Activated T-helper 1 cell treated with anti-CD3 and anti-CD28 coated beads, Interleukin-12 subunit alpha, Interleukin-12 subunit beta, Interleukin-2, Interleukin-4 antibody, amounts not matched to agents 30 ng/mL and 10 ng/mL and 1 ng/mL, durations not matched to agents 14 hours and 24 hours and 36 hours (primary cell): ENCODE measurements at regions of chr3 and their contacts with region 1.

Region 1: GRCh38 chr3:106183762-106184391 is 315.1 kb upstream of the CBLB start:
- DNase-seq: no peak
- H3K4me3 Mint-ChIP-seq: peak overlapping the region; percentile 10
- H3K27ac Mint-ChIP-seq: peak overlapping the region; percentile 31
- H3K4me1 Mint-ChIP-seq: peaks cover 56% of the 10 kb centered on the region
- H3K27me3 Mint-ChIP-seq: no peaks in the 10 kb centered on the region

Region 2: GRCh38 chr3:105647047-105647446 is 536.8 kb before region 1 on chr3:
- intact Hi-C with region 1: no loop called
- DNase-seq: no peak
- H3K4me3 Mint-ChIP-seq: no peak overlapping the region
- H3K27ac Mint-ChIP-seq: no peak overlapping the region
- H3K4me1 Mint-ChIP-seq: no peaks in the 10 kb centered on the region
- H3K27me3 Mint-ChIP-seq: peaks cover 6% of the 10 kb centered on the region

Region 3: DNA sequence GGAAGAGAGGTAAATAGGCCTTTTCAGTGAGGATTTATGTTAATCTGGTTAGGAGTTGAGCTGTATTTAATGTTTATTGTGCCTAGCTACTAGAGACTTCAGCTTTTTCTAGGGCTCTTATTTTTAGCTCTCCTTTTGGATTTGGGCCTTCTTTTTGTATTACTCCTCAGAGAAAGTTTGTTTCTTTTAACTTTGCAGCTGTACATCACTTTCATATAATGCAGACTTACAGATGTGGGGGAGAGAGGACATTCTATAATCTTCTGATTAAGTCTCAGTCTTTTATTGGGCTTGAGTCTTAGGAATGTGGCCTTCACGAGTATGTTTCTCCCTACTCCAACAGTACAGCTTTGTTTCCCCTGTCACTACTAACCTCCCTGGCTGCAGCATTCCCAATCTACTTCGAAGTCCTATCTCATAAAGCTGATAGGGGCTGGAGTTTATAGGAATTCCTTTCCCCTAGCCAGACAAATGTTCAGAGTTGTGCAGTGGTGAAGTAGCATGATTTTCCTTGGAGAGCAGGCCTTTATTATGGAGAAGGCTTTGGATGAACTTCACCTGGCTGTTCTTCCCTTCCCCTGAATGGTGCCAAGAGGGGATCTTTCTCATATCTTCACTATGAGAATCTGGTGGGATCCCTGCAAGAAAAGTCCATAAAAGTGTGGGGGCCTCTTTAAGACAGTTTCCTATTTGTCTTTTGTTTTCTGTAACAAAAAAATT is 232.8 kb before region 1 on chr3:
- intact Hi-C with region 1: no loop called
- DNase-seq: no peak
- H3K4me3 Mint-ChIP-seq: no peak overlapping the region
- H3K27ac Mint-ChIP-seq: no peak overlapping the region
- H3K4me1 Mint-ChIP-seq: no peaks in the 10 kb centered on the region
- H3K27me3 Mint-ChIP-seq: no peaks in the 10 kb centered on the region

Region 4: DNA sequence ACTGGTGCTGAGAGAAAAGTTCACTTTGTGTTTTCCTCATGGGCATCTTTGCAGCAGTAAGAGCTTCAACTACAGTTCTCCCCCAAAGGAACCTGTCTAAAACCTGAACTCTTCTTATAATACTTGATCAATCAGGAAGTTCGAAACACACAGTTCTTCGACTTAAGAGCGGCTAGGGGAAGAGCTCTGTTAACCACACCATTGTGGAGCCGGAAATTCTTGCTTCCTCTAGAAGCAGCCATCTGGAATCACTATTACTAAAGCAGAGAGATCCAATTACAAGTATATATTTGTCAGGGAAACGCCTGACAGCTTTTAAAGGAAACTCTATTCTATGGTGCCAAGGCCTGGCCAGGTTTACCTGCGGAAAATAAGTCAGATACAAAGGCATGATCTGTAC is 22.3 kb after region 1 on chr3:
- intact Hi-C with region 1: loop called (anchors 1 kb)
- DNase-seq: no peak
- H3K4me3 Mint-ChIP-seq: peak overlapping the region; percentile 54
- H3K27ac Mint-ChIP-seq: peak overlapping the region; percentile 92
- H3K4me1 Mint-ChIP-seq: peaks cover 58% of the 10 kb centered on the region
- H3K27me3 Mint-ChIP-seq: no peaks in the 10 kb centered on the region

Region 5: GRCh38 chr3:107064445-107065060 is 880.7 kb after region 1 on chr3:
- intact Hi-C with region 1: loop called (anchors 10 kb)
- DNase-seq: peak; percentile 29
- H3K4me3 Mint-ChIP-seq: no peak overlapping the region
- H3K27ac Mint-ChIP-seq: no peak overlapping the region
- H3K4me1 Mint-ChIP-seq: peaks cover 24% of the 10 kb centered on the region
- H3K27me3 Mint-ChIP-seq: peaks cover 5% of the 10 kb centered on the region